ENCODE measurements at regions of chr4 and their contacts with region 1.

Region 1: GRCh38 chr4:81069706-81070331 is 39.3 kb downstream of the BMP3 start:
- DNase-seq: peak in 1 of 2 donors; percentile 12
- ATAC-seq: peak; percentile 36 to 75 (median 72)
- H3K4me3 ChIP-seq: no peak overlapping the region
- H3K27ac ChIP-seq: no peak overlapping the region
- H3K4me1 ChIP-seq: no peaks in the 10 kb centered on the region
- H3K27me3 ChIP-seq: no peaks in the 10 kb centered on the region
- CTCF ChIP-seq: peak; percentile 82

Region 2: DNA sequence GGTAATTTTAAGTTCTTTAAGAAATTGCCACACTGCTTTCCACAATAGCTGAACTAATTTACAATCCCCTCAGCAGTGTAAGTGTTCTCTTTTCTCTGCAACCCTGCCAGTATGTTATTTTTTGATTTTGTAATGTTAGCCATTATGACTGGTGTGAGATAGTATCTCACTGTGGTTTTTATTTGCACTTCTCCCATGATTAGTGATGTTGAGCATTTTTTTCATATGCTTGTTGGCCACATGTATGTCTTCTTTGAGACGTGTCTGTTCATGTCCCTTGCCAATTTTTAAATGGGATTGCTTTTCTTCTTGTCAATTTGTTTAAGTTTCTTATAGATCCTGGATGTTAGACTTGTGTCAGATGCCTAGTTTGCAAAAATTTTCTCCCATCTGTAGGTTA is 46.7 kb after region 1 on chr4:
- intact Hi-C with region 1: no loop called
- DNase-seq: no peak
- ATAC-seq: no peak
- H3K4me3 ChIP-seq: no peak overlapping the region
- H3K27ac ChIP-seq: no peak overlapping the region
- H3K4me1 ChIP-seq: no peaks in the 10 kb centered on the region
- H3K27me3 ChIP-seq: no peaks in the 10 kb centered on the region
- CTCF ChIP-seq: no peak

Region 3: GRCh38 chr4:81351654-81352445 is 282.0 kb after region 1 on chr4:
- intact Hi-C with region 1: loop called (anchors 5 kb)
- DNase-seq: peak; percentile 60 to 68
- ATAC-seq: peak in 2 of 4 donors; percentile 52 to 72
- H3K4me3 ChIP-seq: no peak overlapping the region
- H3K27ac ChIP-seq: no peak overlapping the region
- H3K4me1 ChIP-seq: no peaks in the 10 kb centered on the region
- H3K27me3 ChIP-seq: no peaks in the 10 kb centered on the region
- CTCF ChIP-seq: peak; percentile 72